Activated CD4-positive, alpha-beta T cell treated with anti-CD3 and anti-CD28 coated beads for 36 hours (primary cell): ENCODE measurements at regions of chr2 and their contacts with region 1.

Region 1: GRCh38 chr2:135985018-135985825 is at the start of gene DARS1:
- DNase-seq: peak; percentile 92
- ATAC-seq: peak; percentile 82
- H3K4me3 Mint-ChIP-seq: peak within 1 kb of the TSS; percentile 93
- H3K27ac Mint-ChIP-seq: peak within 1 kb of the TSS; percentile 97
- H3K4me1 Mint-ChIP-seq: peaks cover 44% of the 10 kb centered on the region
- H3K27me3 Mint-ChIP-seq: no peaks in the 10 kb centered on the region
- total RNA-seq, gene DARS1: 174 to 190 TPM

Region 2: DNA sequence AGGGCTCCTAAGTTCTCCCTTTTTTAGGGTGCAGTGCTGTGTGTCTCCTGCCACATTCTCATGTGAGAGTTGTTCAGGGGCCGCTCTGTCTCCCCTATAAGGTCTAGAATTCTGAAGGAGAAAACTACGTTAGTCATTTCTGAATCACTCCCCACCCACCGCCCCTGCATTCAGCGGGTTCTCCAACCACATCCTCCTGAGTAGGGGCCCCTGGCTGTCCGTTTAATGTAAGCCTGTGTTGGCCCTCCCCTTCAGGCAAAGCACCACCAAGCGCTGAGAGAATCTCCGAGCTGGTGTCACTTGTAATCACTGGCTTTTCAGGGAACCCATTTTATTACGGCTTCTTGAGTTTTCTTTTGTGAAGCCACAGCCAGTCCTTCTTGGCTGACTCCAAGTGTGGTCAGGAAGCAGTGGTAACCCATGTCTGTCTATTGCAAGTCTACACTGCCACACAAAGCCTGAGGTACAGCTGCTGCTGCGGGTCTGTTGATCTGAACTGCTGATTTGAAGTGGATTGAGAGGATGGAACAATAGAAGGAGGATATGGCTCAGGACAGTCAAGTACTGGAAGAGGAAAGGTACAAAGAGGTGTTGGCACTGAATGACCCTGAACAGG is 165.1 kb before region 1 on chr2:
- CTCF ChIA-PET with region 1: no interaction called
- POLR2A ChIA-PET with region 1: no interaction called
- intact Hi-C with region 1: loop called in 1 of 2 experiments (anchors 1 kb)
- DNase-seq: peak; percentile 94
- ATAC-seq: peak; percentile 93
- H3K4me3 Mint-ChIP-seq: peak overlapping the region; percentile 71
- H3K27ac Mint-ChIP-seq: peak overlapping the region; percentile 87
- H3K4me1 Mint-ChIP-seq: peaks cover 45% of the 10 kb centered on the region
- H3K27me3 Mint-ChIP-seq: no peaks in the 10 kb centered on the region

Region 3: GRCh38 chr2:135948642-135949355 is 36.4 kb before region 1 on chr2:
- CTCF ChIA-PET with region 1: no interaction called
- POLR2A ChIA-PET with region 1: no interaction called
- intact Hi-C with region 1: loop called (anchors 1 to 2 kb)
- DNase-seq: no peak
- ATAC-seq: peak; percentile 81
- H3K4me3 Mint-ChIP-seq: peak overlapping the region; percentile 39
- H3K27ac Mint-ChIP-seq: peak overlapping the region; percentile 84
- H3K4me1 Mint-ChIP-seq: peaks cover 55% of the 10 kb centered on the region
- H3K27me3 Mint-ChIP-seq: no peaks in the 10 kb centered on the region

Region 4: GRCh38 chr2:136052369-136053362 is 67.4 kb after region 1 on chr2:
- CTCF ChIA-PET with region 1: interaction called, 7 read pairs
- POLR2A ChIA-PET with region 1: interaction called, 8 read pairs
- intact Hi-C with region 1: loop called (anchors 1 kb)
- DNase-seq: peak; percentile 20
- ATAC-seq: peak; percentile 21
- H3K4me3 Mint-ChIP-seq: no peak overlapping the region
- H3K27ac Mint-ChIP-seq: peak overlapping the region; percentile 91
- H3K4me1 Mint-ChIP-seq: peaks cover 79% of the 10 kb centered on the region
- H3K27me3 Mint-ChIP-seq: no peaks in the 10 kb centered on the region

Region 5: DNA sequence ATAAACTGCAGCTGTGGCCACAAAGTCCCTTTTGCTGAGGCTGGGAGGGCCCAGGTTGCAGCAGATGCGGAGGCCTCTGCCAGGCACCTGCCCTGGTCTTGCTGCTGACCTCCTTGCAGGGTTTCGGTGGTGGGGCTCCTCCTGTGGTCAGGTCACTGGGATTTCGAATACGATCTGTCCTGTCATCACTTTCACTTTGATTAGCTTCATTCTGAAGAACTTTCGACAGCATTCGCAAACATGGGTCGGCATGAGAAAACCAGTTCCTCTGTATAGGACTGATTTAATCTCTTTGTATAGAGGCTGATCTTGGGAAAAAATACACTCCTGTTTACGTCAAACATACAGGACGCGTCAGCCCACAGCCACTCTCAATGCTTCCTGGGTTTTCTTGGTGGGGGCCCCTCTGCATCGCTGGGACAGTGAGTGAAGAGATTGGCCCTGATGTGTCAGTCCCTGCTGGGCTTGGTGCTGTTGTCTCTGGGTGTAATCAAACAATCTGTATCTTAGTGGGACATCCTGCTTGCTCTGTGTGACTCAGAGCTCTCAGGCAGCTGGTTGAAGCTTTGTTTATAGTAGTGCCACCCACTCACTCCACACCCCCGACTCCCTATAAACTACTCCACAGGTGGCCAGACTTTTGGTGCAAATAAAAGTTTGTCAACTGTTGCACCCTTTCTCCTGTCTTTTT is 342.1 kb after region 1 on chr2:
- CTCF ChIA-PET with region 1: no interaction called
- POLR2A ChIA-PET with region 1: no interaction called
- intact Hi-C with region 1: loop called (anchors 1 to 2 kb)
- DNase-seq: peak; percentile 88
- ATAC-seq: peak; percentile 95
- H3K4me3 Mint-ChIP-seq: peak overlapping the region; percentile 56
- H3K27ac Mint-ChIP-seq: peak overlapping the region; percentile 92
- H3K4me1 Mint-ChIP-seq: peaks cover 69% of the 10 kb centered on the region
- H3K27me3 Mint-ChIP-seq: no peaks in the 10 kb centered on the region